OCI-LY7 (cell line): ENCODE measurements at regions of chrX and their contacts with region 1.

Region 1: GRCh38 chrX:133171962-133172708 is 46.0 kb downstream of the TFDP3 start:
- DNase-seq: peak; percentile 2
- H3K4me3 ChIP-seq: no peak overlapping the region
- H3K27ac ChIP-seq: no peak overlapping the region
- H3K4me1 ChIP-seq: no peaks in the 10 kb centered on the region
- CTCF ChIP-seq: peak; percentile 64

Region 2: GRCh38 chrX:132631579-132632232 is 540.4 kb before region 1 on chrX:
- CTCF ChIA-PET with region 1: no interaction called
- POLR2A ChIA-PET with region 1: no interaction called
- intact Hi-C with region 1: loop called (anchors 5 kb)
- DNase-seq: peak; percentile 14
- H3K4me3 ChIP-seq: no peak overlapping the region
- H3K27ac ChIP-seq: no peak overlapping the region
- H3K4me1 ChIP-seq: no peaks in the 10 kb centered on the region
- CTCF ChIP-seq: peak; percentile 69

Region 3: DNA sequence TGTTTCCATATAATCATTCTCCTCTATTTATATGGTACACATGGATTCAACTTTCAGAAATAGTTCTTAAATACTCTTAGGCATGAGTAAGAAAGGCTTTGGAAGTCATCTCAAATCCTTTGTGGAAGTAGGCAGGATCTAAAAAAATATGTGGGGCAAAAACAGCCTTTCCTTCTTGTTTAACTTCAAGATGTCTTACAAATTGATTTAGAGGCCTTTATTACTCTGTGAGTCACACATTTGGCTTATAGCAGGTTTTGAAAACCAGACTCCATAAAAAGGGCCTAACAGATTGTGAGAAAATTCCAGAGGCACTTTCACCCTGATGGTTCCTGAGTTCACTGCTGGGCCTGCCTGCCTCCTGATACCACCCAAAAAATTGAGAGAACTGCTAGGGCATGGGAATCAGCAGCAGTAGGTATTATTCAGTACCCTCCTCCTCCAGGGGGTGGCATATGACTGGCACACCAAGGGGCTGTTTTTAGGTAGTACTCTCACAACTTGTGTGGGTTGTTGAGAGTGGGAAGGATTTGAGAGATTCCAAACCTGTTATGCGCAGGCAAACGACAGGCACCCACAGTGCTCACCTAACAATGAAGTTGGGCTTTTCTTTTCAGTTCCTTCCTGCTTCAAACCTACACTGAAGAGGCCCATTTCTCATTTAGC is 520.6 kb before region 1 on chrX:
- CTCF ChIA-PET with region 1: no interaction called
- POLR2A ChIA-PET with region 1: no interaction called
- intact Hi-C with region 1: no loop called
- DNase-seq: no peak
- H3K4me3 ChIP-seq: no peak overlapping the region
- H3K27ac ChIP-seq: no peak overlapping the region
- H3K4me1 ChIP-seq: no peaks in the 10 kb centered on the region
- CTCF ChIP-seq: no peak

Region 4: GRCh38 chrX:132984058-132984650 is 188.0 kb before region 1 on chrX:
- CTCF ChIA-PET with region 1: no interaction called
- POLR2A ChIA-PET with region 1: no interaction called
- intact Hi-C with region 1: loop called (anchors 5 kb)
- DNase-seq: no peak
- H3K4me3 ChIP-seq: no peak overlapping the region
- H3K27ac ChIP-seq: no peak overlapping the region
- H3K4me1 ChIP-seq: no peaks in the 10 kb centered on the region
- CTCF ChIP-seq: no peak

Region 5: DNA sequence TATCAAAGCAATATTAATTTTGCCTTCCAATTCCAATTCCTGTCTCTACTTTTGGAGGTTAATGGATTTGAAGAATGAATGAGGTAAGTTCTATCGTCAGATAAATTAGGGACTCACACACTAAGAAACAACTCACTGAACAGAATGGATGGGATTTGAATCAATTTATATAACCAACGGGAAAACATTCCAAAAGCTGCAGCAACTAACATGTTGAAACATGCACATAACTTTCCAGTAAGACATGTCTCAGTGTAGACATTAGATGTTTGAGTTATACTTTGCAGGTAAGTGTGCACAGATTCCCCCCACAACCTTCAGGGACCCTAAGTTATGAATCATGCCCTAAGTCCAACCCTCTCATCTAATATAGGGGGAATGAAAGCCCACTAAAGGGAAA is 11.7 kb after region 1 on chrX:
- CTCF ChIA-PET with region 1: no interaction called
- POLR2A ChIA-PET with region 1: no interaction called
- intact Hi-C with region 1: no loop called
- DNase-seq: no peak
- H3K4me3 ChIP-seq: no peak overlapping the region
- H3K27ac ChIP-seq: no peak overlapping the region
- H3K4me1 ChIP-seq: no peaks in the 10 kb centered on the region
- CTCF ChIP-seq: no peak

Region 6: DNA sequence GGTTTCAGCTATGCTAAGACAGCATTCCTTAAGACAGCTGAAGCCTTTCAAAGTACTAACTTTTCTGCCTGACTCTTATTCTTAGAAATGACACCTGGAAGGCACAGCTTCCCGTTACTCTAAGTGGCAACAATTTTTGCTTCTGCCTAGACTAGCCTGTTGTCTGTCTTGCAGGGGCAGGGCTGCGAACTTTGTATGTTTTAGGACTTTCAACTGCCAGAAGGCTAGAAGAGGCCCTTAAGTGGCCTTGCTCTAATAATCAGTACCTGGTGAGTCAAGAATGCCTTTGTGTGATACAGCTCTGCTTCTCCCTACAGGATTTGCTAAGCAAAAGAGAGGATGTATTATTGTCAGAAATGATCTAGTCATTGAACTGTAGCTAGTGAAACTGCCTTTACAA is 76.0 kb after region 1 on chrX:
- CTCF ChIA-PET with region 1: no interaction called
- POLR2A ChIA-PET with region 1: no interaction called
- intact Hi-C with region 1: no loop called
- DNase-seq: no peak
- H3K4me3 ChIP-seq: no peak overlapping the region
- H3K27ac ChIP-seq: no peak overlapping the region
- H3K4me1 ChIP-seq: no peaks in the 10 kb centered on the region
- CTCF ChIP-seq: no peak

Region 7: DNA sequence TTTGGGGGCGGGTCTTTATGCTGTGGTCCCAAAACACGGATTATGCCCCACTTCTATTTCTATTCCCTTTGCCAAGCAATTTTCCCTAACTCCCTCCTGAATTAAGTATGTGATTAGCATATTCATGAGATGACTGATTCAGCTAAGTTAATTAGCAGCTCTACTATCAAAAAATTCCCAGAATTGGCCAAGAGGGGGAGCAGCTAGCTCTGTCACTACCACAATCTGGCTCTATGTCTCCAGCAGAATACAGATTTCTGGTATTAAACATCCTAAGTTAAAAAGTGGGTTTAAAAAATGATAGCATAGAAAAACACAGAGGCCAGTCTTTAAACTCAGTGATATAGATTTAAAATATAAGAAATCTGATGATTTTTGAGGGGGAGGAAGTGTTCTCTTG is 162.9 kb after region 1 on chrX:
- CTCF ChIA-PET with region 1: no interaction called
- POLR2A ChIA-PET with region 1: no interaction called
- intact Hi-C with region 1: no loop called
- DNase-seq: peak; percentile 20
- H3K4me3 ChIP-seq: no peak overlapping the region
- H3K27ac ChIP-seq: no peak overlapping the region
- H3K4me1 ChIP-seq: no peaks in the 10 kb centered on the region
- CTCF ChIP-seq: peak; percentile 70